Panc1 (cell line): ENCODE measurements at regions of chr1 and their contacts with region 1.

Region 1: GRCh38 chr1:150613061-150613920 is 16.1 kb downstream of the ENSA start:
- DNase-seq: peak; percentile 88
- ATAC-seq: peak; percentile 77
- H3K4me3 ChIP-seq: no peak overlapping the region
- H3K27ac ChIP-seq: peak overlapping the region; percentile 37
- H3K4me1 ChIP-seq: peaks cover 20% of the 10 kb centered on the region
- H3K27me3 ChIP-seq: no peaks in the 10 kb centered on the region
- CTCF ChIP-seq: no peak

Region 2: GRCh38 chr1:149917571-149918144 is 695.6 kb before region 1 on chr1 and contains the start of gene SV2A:
- CTCF ChIA-PET with region 1: no interaction called
- POLR2A ChIA-PET with region 1: interaction called, 13 read pairs
- in situ Hi-C with region 1: no loop called
- intact Hi-C with region 1: no loop called
- DNase-seq: no peak
- ATAC-seq: no peak
- H3K4me3 ChIP-seq: peak within 1 kb of the TSS; percentile 41 to 42
- H3K27ac ChIP-seq: no peak within 1 kb of the TSS
- H3K4me1 ChIP-seq: peaks cover 4% of the 10 kb centered on the region; the same call in 1 of the 2 replicates
- H3K27me3 ChIP-seq: no peaks in the 10 kb centered on the region
- CTCF ChIP-seq: no peak
- total RNA-seq, gene SV2A: 2.9 TPM

Region 3: GRCh38 chr1:150537732-150538684 is 75.3 kb before region 1 on chr1:
- CTCF ChIA-PET with region 1: no interaction called
- POLR2A ChIA-PET with region 1: no interaction called
- in situ Hi-C with region 1: no loop called
- intact Hi-C with region 1: no loop called
- DNase-seq: no peak
- ATAC-seq: no peak; the same call in 1 of the 2 replicates
- H3K4me3 ChIP-seq: no peak overlapping the region
- H3K27ac ChIP-seq: no peak overlapping the region
- H3K4me1 ChIP-seq: no peaks in the 10 kb centered on the region
- H3K27me3 ChIP-seq: no peaks in the 10 kb centered on the region
- CTCF ChIP-seq: no peak